CD8-positive, alpha-beta T cell (primary cell): ENCODE measurements at regions of chr9 and their contacts with region 1.

Region 1: DNA sequence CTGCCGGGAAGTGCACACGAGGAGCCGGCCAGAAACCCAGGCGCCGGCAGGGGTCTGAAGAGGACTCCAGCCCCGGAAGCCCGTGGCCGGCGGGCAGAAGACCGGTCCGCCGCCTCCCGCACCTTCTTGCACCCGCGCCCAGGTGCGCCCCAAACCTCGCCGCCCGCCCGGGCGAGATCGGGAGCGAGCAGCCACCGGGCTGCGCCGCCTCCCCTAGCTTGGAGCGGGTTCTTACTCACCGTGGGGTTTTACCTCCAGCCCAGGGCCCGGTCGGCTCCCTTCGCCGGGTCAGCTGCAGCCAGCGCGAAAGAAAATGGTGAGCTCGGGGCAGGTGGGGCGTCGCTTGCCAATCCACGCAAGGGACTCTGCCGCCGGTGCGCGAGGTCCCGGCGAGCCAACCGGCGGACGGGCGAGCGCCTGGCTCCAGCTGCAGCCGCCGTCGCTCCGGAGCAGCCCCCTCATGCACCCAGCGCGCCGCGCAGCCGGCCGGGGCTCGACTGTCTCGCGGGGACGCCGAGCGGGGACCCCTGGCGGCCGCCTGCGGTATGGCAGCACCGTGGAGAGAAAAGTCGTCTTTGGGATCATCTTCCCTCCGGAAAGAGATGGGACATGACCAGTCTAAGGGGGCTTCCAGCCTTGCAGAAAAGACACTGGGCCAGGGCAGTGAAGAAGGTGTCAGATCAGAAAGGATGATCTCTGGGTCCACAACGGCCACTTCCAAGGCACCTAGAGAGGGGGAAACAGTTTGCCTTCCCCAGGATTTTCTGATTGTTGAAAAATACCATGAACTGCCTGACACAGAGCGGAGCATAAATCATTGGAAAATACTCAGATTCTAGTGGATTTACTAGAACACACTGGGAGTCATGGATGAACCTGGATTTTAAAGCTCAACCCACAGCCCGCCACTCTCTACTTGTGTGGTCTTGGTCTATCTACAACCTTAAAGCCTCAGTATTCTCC is at the start of gene MOB3B:
- DNase-seq: peak; percentile 49 to 86 (median 77)
- ATAC-seq: peak; percentile 95
- H3K4me3 ChIP-seq: peak within 1 kb of the TSS; percentile 44 to 67
- H3K4me3 Mint-ChIP-seq: peak within 1 kb of the TSS; percentile 92
- H3K27ac ChIP-seq: no peak within 1 kb of the TSS
- H3K27ac Mint-ChIP-seq: no peak within 1 kb of the TSS
- H3K4me1 ChIP-seq: no peaks in the 10 kb centered on the region
- H3K4me1 Mint-ChIP-seq: peaks cover 12% of the 10 kb centered on the region
- H3K27me3 ChIP-seq: peaks cover 0 to 3% of the 10 kb centered on the region in 2 experiments
- H3K27me3 Mint-ChIP-seq: no peaks in the 10 kb centered on the region
- CTCF ChIP-seq: peak; percentile 95
- total RNA-seq, gene MOB3B: 0.11 to 0.17 TPM

Region 2: DNA sequence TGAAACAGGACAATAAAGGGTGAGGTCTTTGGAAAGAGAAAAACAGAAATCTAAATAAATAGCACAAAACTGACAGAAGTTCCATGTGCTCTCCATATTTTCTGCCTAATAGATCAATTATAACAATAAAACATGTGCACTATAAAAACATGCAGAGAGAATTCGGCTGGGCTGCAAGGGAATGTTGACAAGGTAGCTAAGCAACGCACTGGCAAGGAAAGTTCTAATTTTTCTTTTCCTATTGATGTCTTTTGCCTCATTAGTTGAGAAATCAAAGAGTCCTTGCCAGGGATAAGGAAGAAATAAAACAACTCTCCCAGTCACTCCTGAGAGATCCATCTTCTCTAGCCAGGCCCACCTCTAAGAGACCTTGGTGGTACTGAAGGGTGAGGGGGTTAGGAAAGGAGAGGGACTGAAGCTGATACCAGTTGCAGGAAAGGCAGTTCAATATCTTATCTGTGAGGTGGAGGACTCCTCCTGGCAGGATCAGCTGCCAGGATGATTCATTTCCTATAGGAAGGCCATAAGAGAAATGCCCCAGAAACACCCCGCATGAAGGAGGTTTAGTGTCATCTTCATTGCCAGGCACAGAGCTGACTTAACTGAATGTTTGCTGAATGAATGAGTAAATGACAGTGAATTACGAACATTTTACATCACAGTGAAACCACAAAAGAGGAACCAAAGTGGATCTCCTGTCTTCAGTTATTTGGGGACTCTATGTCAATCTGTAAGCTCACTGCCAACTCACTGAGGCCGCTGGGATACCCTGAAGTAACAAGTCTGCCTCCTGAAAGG is 69.2 kb before region 1 on chr9:
- CTCF ChIA-PET with region 1: no interaction called
- POLR2A ChIA-PET with region 1: no interaction called
- intact Hi-C with region 1: loop called in 1 of 2 experiments (anchors 10 kb)
- DNase-seq: peak in 1 of 9 experiments; percentile 28
- ATAC-seq: no peak
- H3K4me3 ChIP-seq: no peak overlapping the region
- H3K4me3 Mint-ChIP-seq: no peak overlapping the region
- H3K27ac ChIP-seq: no peak overlapping the region
- H3K27ac Mint-ChIP-seq: no peak overlapping the region
- H3K4me1 ChIP-seq: no peaks in the 10 kb centered on the region
- H3K4me1 Mint-ChIP-seq: peaks cover 9% of the 10 kb centered on the region
- H3K27me3 ChIP-seq: no peaks in the 10 kb centered on the region
- H3K27me3 Mint-ChIP-seq: no peaks in the 10 kb centered on the region
- CTCF ChIP-seq: no peak

Region 3: GRCh38 chr9:27483576-27483975 is 46.0 kb before region 1 on chr9:
- CTCF ChIA-PET with region 1: no interaction called
- POLR2A ChIA-PET with region 1: no interaction called
- intact Hi-C with region 1: loop called in 1 of 2 experiments (anchors 5 kb)
- DNase-seq: no peak
- ATAC-seq: no peak
- H3K4me3 ChIP-seq: no peak overlapping the region
- H3K4me3 Mint-ChIP-seq: no peak overlapping the region
- H3K27ac ChIP-seq: no peak overlapping the region
- H3K27ac Mint-ChIP-seq: no peak overlapping the region
- H3K4me1 ChIP-seq: peaks cover 12% of the 10 kb centered on the region
- H3K4me1 Mint-ChIP-seq: peaks cover 21% of the 10 kb centered on the region
- H3K27me3 ChIP-seq: no peaks in the 10 kb centered on the region
- H3K27me3 Mint-ChIP-seq: no peaks in the 10 kb centered on the region
- CTCF ChIP-seq: no peak

Region 4: GRCh38 chr9:27539479-27540441 is 10.2 kb after region 1 on chr9:
- CTCF ChIA-PET with region 1: interaction called, 22 read pairs
- POLR2A ChIA-PET with region 1: no interaction called
- intact Hi-C with region 1: no loop called
- DNase-seq: no peak
- ATAC-seq: no peak
- H3K4me3 ChIP-seq: no peak overlapping the region
- H3K4me3 Mint-ChIP-seq: no peak overlapping the region
- H3K27ac ChIP-seq: no peak overlapping the region
- H3K27ac Mint-ChIP-seq: no peak overlapping the region
- H3K4me1 ChIP-seq: no peaks in the 10 kb centered on the region
- H3K4me1 Mint-ChIP-seq: no peaks in the 10 kb centered on the region
- H3K27me3 ChIP-seq: no peaks in the 10 kb centered on the region
- H3K27me3 Mint-ChIP-seq: no peaks in the 10 kb centered on the region
- CTCF ChIP-seq: no peak

Region 5: DNA sequence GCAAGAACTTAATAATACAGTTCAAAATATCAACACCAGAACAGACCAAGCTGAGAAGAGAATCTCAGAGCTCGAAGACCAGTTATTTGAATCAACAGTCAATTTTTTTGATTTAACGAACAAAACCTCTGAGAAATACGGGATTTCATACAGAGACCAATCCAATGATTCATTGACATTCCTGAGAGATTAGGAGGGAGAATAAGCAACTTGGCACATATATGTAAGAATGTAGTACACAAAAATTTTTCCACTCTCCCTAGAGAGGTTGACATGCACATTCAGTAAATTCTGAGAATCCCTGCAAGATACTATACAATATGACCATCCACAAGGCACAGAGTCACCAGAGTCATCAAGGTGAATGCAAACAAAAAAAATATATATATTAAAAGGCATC is 1621.0 kb after region 1 on chr9:
- CTCF ChIA-PET with region 1: no interaction called
- POLR2A ChIA-PET with region 1: no interaction called
- intact Hi-C with region 1: no loop called
- DNase-seq: no peak
- ATAC-seq: no peak
- H3K4me3 ChIP-seq: no peak overlapping the region
- H3K4me3 Mint-ChIP-seq: no peak overlapping the region
- H3K27ac ChIP-seq: no peak overlapping the region
- H3K27ac Mint-ChIP-seq: no peak overlapping the region
- H3K4me1 ChIP-seq: no peaks in the 10 kb centered on the region
- H3K4me1 Mint-ChIP-seq: no peaks in the 10 kb centered on the region
- H3K27me3 ChIP-seq: no peaks in the 10 kb centered on the region
- H3K27me3 Mint-ChIP-seq: no peaks in the 10 kb centered on the region
- CTCF ChIP-seq: no peak